Left cardiac atrium (tissue), 4 donors: ENCODE measurements at regions of chr7 and their contacts with region 1.

Region 1: DNA sequence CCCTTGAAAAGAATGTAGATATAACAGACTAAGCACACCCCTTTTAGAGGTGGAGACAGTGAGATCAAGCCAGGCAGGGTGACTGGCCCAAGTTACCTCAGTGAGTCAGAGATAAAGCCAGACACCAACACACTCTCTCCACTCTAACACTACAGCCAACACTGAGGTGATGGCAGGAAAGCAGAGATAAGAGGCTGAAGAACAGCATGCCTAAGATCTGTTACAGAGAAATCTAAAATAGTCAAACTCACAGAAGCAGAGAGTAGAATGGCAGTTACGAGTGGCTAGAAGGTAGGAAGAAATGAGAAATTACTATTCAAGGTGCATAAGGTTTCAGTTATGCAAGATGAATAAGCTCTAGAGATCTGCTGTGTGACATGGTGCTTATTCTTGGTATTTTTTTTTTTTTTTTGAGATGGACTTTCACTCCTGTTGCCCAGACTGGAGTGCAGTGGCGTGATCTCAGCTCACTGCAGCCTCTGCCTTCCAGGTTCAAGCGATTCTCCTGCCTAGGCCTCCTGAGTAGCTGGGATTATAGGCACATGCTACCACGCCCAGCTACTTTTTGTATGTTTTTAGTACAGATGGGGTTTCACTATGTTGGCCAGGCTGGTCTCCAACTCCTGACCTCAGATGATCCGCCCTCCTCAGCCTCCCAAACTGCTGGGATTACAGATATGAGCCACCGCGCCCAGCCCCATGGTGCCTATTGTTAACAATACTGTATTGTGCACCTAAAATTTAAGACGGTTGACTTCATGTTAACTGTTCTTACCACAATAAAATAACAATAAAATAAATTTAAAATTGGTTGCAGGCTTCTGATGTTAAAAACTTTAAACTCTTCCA is 28.7 kb downstream of the ICA1 start:
- DNase-seq: peak; percentile 32
- ATAC-seq: peak; percentile 88 to 98

Region 2: DNA sequence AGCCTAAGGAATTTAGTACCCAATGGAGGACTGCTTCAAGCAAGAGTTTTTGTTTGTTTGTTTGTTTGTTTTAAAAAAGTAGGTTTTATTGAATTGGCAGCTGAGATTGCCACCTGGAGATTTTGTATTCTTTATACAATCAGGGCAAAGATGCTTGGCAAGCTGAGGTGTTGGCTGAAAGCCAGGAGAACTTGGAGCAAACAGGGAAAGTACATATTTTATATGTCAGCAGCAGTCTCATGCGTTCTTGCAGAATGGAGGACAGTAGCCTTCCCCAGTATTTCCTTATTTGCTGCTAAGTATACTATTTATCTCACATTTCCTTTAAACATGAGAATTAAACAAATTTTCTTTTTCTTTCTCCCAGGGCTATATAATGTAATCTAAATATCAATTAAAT is 51.4 kb after region 1 on chr7:
- intact Hi-C with region 1: loop called in 1 of 2 experiments (anchors 5 kb)
- DNase-seq: no peak
- ATAC-seq: no peak

Region 3: DNA sequence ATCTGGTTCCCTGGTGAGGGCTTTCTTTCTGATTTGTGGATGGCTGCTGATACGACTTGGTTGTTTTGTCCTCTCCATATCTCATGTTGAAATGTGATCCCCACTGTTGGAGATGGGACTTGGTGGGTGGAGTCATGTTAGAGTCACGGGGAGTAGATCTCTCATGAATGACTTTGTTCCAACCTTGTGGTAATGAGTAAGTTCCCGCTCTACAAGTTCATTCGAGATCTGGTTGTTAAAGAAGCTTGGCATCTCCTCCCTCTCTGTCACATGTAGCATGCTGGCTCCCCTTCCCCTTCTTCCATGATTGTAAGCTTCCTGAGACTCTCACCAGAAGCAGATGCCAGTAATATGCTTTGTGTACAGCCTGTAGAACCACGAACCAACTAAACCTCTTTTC is 163.1 kb after region 1 on chr7:
- intact Hi-C with region 1: no loop called
- DNase-seq: no peak
- ATAC-seq: no peak